Posterior cingulate gyrus (tissue), 11 donors: ENCODE measurements at regions of chr2 and their contacts with region 1.

Region 1: DNA sequence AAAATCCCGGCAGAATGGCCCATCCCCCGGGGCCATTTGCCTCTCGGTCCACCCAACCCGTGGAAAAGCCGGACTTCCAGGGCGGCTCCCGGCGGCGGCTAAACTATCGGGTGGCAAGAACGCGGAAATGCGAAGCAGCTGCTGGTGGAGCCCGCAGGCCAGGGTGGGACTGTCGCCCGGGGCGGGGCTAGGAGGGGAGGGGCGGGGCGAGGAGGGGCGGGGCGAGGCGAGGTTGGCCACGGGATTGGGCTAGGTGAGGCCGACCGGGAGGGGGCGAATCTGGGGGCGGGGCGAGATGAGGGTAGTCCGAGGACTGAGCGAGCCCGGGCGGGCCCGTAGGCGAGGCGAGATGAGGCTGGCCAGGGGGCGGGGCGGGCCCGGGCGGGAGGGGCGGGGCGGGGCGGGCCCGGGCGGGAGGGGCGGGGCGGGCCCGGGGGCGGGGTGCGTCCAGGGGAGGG is 315 bp upstream of the SLC66A3 start:
- DNase-seq: peak; percentile 88 to 99 (median 94)

Region 2: DNA sequence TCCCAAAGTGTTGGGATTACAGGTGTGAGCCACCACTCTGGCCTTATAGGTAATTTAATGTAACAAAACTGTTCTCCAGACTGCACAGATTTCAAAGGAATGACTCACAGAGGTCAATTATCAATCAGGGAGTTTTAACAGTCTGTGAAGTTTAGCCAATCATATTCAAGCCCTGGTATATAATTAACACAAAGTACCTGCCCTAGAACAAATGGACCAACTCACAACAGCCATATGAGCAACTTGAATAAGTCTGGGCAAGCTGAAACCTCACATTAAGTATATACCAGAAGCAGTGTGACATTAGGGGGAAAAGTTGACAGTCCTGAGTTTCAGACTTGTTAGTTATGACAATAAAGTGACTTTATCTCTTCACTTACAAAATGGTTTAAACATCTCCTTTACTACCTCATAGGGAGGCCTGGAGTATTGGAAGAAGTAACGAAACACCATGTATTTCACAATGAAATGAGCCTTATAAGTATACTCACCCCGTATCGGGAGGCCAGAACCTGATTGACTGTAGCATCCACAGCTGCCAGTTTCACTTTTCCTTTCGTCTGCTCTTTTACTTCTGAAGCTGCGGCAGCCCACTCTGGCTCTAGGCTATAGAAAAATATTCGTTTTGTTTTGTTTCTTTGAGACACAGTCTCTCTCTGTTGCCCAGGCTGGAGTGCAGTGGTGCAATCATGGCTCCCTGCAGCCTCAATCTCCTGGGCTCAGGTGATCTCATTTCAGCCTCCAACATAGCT is 364.5 kb before region 1 on chr2:
- intact Hi-C with region 1: no loop called
- DNase-seq: no peak

Region 3: DNA sequence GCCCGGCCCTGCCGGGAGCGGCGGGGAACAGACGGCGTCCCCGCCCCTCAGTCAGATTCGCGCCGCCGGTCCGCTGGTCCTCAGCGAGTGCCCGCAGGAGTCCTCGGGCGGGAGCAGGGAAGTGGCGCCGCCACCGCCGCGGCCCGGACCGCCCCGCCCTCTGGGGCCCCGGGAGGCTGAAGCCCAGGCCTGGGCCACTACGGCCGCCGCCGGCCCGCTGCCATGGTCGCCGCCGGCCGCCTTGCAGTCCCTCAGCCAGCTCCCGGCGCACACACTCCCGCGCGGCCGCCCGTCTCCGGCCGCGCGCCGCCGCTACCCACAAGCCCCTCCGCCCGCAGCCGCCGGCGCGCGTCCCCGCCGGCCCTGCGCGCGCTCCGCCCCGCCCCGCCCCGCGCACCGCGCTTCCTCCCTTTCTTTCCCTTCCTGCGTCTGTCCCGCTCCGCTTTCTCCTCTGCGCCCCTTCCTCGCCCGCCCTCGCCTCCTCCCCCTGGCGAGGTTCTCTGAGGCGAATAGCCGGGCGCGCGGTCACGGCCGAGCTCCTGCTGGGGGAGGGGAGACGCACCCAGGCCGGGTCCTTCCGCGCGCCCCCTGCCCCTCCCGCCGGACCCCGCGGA is 189.5 kb after region 1 on chr2 and contains the start of gene ROCK2:
- intact Hi-C with region 1: loop called (anchors 10 kb)
- DNase-seq: peak; percentile 72 to 97 (median 82)